ENCODE measurements at regions of chr10 and their contacts with region 1.

Region 1: DNA sequence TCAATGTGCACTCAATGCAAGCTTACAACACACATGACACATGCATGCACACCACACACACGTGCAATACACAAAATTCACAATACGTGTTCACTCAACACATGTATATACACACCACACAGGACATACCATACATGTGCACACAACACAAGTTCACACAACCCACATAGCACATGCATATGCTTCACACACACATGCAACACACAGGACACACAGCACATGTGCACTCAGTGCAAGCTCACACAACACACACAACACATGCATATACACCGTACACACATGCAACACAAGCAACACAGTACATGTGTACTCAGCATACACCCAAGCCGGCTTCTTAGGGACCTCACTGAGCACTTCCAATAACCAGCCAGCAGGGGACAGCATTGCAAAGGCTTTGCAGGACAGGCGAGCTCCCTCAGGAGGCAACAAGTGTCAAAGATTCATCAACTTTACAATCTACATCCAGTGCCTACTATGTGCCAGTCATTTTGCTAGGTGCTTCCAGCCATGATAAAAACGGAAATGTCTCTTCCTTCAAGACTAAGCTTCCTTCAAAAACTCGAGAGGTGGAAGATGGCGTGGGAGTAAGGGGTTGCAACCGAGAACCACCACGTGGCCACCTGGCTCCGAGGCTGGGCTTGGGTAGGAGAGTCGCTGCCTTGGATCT is 61.1 kb downstream of the JCAD start:
- DNase-seq: peak; percentile 75 to 92 (median 83)
- H3K4me3 ChIP-seq: no peak overlapping the region
- H3K27ac ChIP-seq: no peak overlapping the region
- H3K4me1 ChIP-seq: peaks cover 18 to 23% of the 10 kb centered on the region in 2 donors
- H3K27me3 ChIP-seq: no peaks in the 10 kb centered on the region
- CTCF ChIP-seq: peak; percentile 96 to 99 (median 99)
- POLR2A ChIP-seq: no peak

Region 2: DNA sequence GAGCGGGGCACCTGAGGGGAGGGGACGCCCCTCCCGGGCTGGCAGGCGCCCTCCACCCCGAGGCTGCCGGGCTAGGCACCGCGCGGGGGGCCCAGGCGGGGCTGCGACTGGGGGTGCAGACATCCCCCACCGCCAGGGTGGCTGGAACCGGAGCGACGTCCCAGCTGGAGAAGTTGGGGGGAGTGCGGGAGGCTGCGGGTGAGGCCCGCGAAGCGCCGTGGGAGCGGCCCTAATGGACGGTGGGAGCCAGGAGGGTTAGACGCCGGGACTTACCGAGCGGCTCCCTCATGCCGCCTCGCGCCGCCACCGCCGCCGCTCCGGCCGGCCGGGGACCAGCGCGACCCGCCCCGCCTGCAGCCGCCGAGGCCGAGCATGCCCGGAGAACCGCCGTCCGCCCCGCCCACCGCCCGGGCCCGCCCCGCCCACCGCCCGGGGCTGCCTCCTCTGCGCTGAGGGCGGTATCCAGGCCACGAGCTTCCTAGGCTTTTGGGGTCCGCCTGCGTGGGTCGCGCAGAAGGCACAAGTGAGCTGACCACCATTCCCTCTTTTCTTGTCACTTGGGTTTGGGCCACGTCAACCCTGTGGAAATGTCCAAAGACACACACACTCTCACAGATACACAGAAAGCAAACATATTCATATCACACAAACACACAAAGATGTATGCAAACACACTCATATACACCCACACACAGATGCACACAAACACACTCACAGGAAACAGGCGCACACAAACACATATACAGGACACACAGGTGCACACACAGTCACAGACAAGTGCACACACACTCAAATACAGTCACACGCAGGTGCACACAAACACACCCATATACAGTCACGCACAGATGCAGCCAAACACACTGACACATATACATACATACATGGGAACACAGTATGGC is 61.2 kb after region 1 on chr10 and contains the start of gene JCAD:
- intact Hi-C with region 1: loop called in 1 of 2 experiments (anchors 10 kb)
- DNase-seq: peak; percentile 51 to 83 (median 78)
- H3K4me3 ChIP-seq: peak within 1 kb of the TSS; percentile 28 to 89 (median 50)
- H3K27ac ChIP-seq: peak within 1 kb of the TSS in 4 of 5 donors; percentile 35 to 91 (median 72)
- H3K4me1 ChIP-seq: peaks cover 3 to 4% of the 10 kb centered on the region in 2 donors
- H3K27me3 ChIP-seq: no peaks in the 10 kb centered on the region
- CTCF ChIP-seq: peak in 1 of 6 experiments; percentile 21
- POLR2A ChIP-seq: peak in 1 of 2 donors; percentile 50
- total RNA-seq, gene JCAD: 10.7 to 53.5 (median 24.7) TPM

Region 3: GRCh38 chr10:30241422-30242110 is 243.3 kb after region 1 on chr10:
- intact Hi-C with region 1: loop called (anchors 5 kb)
- DNase-seq: no peak
- H3K4me3 ChIP-seq: no peak overlapping the region
- H3K27ac ChIP-seq: no peak overlapping the region
- H3K4me1 ChIP-seq: no peaks in the 10 kb centered on the region
- H3K27me3 ChIP-seq: no peaks in the 10 kb centered on the region
- CTCF ChIP-seq: no peak
- POLR2A ChIP-seq: no peak